Caco-2 (cell line): ENCODE measurements at regions of chr11 and their contacts with region 1.

Region 1: DNA sequence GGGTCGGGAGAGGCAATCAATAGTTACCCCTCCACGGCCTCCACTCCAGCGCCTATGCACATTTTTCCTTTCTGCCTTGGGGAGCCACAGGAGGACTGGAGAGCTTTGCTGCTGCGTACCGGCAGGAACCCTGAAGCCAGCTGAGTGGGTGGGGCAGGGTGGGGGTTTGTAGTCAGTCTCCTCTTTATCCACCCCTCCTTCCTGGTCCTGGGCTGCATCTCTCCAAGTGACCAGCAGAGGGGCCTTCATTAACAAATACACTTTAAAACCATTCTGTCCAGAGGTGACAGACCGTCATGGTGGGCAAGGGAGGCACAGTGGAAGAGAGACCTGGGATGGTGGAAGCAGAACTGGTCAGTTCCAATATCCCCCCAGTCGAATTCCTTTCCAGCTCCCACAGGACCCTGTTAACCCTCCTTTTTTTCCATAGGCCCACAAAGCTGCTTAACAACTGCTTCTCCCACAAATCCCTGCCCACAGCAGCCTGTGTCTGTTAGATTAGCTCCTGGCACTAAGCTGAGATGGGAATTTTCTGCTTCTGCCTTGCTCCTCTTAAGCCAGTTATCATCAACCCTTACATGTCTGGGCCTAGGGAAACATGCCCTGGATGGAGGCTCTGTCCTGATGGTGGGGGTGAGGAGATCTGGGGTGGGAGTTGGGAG is 3.9 kb upstream of the ABCG4 start:
- DNase-seq: peak; percentile 87 to 93
- H3K4me3 ChIP-seq: no peak overlapping the region
- H3K4me3 Mint-ChIP-seq: no peak overlapping the region
- H3K27ac Mint-ChIP-seq: no peak overlapping the region
- H3K4me1 ChIP-seq: peaks cover 5% of the 10 kb centered on the region; the same call in 1 of the 2 replicates
- H3K4me1 Mint-ChIP-seq: no peaks in the 10 kb centered on the region
- H3K27me3 ChIP-seq: no peaks in the 10 kb centered on the region; the same call in 1 of the 2 replicates
- H3K27me3 Mint-ChIP-seq: peaks cover 10% of the 10 kb centered on the region
- CTCF ChIP-seq: peak; percentile 92 to 95

Region 2: DNA sequence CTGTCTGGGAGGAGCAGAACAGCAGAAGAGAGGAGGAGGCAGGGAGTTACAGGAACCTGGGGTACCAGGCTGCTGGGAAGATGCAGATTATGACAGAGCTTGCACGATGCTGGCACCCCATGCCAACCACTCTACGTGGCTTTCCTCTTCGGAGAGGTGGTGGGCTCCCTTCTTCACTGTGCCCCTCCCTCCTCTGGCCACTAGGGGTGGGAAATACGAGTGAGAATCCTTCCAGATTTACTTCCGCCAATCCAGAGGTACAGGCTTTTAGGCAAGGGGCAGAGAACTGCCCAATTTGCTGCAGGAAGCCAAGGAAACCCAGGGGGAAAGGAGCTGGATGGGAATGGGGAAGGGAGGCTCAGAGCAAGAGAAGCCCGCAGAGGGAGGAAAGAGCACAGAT is 100.2 kb before region 1 on chr11:
- CTCF ChIA-PET with region 1: no interaction called
- POLR2A ChIA-PET with region 1: no interaction called
- intact Hi-C with region 1: no loop called
- DNase-seq: no peak
- H3K4me3 ChIP-seq: no peak overlapping the region
- H3K4me3 Mint-ChIP-seq: no peak overlapping the region
- H3K27ac Mint-ChIP-seq: peak overlapping the region; percentile 63
- H3K4me1 ChIP-seq: peaks cover 6% of the 10 kb centered on the region; the same call in 1 of the 2 replicates
- H3K4me1 Mint-ChIP-seq: peaks cover 10% of the 10 kb centered on the region
- H3K27me3 ChIP-seq: no peaks in the 10 kb centered on the region
- H3K27me3 Mint-ChIP-seq: no peaks in the 10 kb centered on the region
- CTCF ChIP-seq: peak; percentile 38 to 48

Region 3: GRCh38 chr11:119155733-119156492 is 11.0 kb after region 1 on chr11:
- CTCF ChIA-PET with region 1: interaction called, 19 read pairs
- POLR2A ChIA-PET with region 1: no interaction called
- intact Hi-C with region 1: no loop called
- DNase-seq: peak; percentile 79 to 80
- H3K4me3 ChIP-seq: no peak overlapping the region
- H3K4me3 Mint-ChIP-seq: no peak overlapping the region
- H3K27ac Mint-ChIP-seq: no peak overlapping the region
- H3K4me1 ChIP-seq: no peaks in the 10 kb centered on the region
- H3K4me1 Mint-ChIP-seq: peaks cover 6% of the 10 kb centered on the region
- H3K27me3 ChIP-seq: no peaks in the 10 kb centered on the region
- H3K27me3 Mint-ChIP-seq: peaks cover 17% of the 10 kb centered on the region
- CTCF ChIP-seq: peak; percentile 61 to 78

Region 4: DNA sequence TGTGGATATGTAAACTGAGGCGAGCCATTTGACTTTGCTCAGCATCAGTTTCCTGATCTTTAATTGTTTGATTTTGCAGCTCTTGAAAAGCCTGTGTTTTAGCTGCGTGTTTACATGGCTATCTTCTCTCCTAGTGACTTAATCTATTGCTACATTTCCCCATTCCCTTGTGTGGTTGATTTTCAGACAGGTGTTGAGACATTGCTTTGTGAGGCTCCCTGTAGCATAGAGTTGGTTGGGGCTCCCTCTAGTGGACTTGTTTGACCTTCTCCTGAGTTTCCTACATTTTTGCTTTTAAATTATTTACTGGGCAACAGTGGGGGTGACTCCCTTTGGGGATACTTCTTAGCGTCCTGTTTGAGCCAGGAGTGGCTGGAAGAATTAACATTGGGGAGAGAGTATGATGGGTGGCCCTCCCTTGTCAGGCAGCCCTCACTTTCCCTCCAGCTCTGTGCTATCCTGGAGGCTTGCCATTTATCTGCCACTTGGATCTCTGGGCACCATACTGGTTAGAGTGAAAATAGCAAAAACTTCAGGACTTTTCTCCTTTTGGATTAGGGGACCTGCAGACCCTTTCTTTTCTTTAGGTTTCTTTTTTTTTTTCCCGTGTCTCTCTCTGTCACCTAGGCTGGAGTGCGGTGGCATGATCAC is 52.0 kb after region 1 on chr11:
- CTCF ChIA-PET with region 1: interaction called, 22 read pairs
- POLR2A ChIA-PET with region 1: interaction called, 3 read pairs
- intact Hi-C with region 1: loop called (anchors 1 kb)
- DNase-seq: peak; percentile 86 to 92
- H3K4me3 ChIP-seq: no peak overlapping the region
- H3K4me3 Mint-ChIP-seq: no peak overlapping the region
- H3K27ac Mint-ChIP-seq: peak overlapping the region; percentile 15
- H3K4me1 ChIP-seq: peaks cover 10% of the 10 kb centered on the region
- H3K4me1 Mint-ChIP-seq: peaks cover 10% of the 10 kb centered on the region
- H3K27me3 ChIP-seq: no peaks in the 10 kb centered on the region
- H3K27me3 Mint-ChIP-seq: peaks cover 2% of the 10 kb centered on the region
- CTCF ChIP-seq: peak; percentile 93 to 96

Region 5: DNA sequence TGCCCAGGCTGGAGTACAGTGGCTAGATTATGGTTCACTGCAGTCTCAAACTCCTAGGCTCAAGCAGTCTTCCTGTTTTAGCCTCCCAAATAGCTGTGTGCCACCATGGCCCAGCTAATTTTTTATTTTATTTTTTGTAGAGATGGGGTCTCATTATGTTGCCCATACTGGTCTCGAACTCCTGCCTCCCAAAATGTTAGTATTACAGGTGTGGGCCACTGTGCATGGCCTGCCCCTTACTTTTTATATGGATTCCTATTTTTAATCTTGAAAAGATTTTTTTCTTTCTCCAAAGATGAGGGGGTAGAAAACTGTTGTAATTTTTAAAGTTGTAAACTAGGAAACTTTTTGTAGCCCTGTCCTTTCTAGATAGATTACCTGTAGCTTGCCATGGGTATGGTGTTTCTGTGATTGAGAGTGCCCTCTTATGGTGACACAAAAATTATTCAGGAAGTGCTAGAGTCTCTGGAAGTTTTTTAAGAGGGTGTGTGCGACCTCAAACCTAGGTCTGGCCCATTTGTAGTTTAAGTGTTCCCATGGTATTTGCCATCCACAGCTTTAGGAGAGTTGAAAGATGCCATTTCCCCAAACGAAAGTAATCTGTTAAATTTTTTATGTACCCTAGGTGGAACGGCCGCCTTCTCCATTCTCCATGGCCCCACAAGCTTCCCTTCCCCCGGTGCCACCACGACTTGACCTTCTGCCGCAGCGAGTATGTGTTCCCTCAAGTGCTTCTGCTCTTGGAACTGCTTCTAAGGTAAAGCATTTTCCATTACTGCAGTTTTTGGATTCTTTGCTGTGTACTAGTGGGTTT is 139.6 kb after region 1 on chr11:
- CTCF ChIA-PET with region 1: interaction called, 4 read pairs
- POLR2A ChIA-PET with region 1: no interaction called
- intact Hi-C with region 1: loop called (anchors 5 kb)
- DNase-seq: peak in 1 of 2 experiments; percentile 63
- H3K4me3 ChIP-seq: no peak overlapping the region
- H3K4me3 Mint-ChIP-seq: no peak overlapping the region
- H3K27ac Mint-ChIP-seq: no peak overlapping the region
- H3K4me1 ChIP-seq: no peaks in the 10 kb centered on the region
- H3K4me1 Mint-ChIP-seq: no peaks in the 10 kb centered on the region
- H3K27me3 ChIP-seq: no peaks in the 10 kb centered on the region
- H3K27me3 Mint-ChIP-seq: no peaks in the 10 kb centered on the region
- CTCF ChIP-seq: peak; percentile 71 to 74

Region 6: GRCh38 chr11:119323538-119324033 is 178.6 kb after region 1 on chr11:
- CTCF ChIA-PET with region 1: no interaction called
- POLR2A ChIA-PET with region 1: no interaction called
- intact Hi-C with region 1: loop called (anchors 1 kb)
- DNase-seq: peak; percentile 82 to 89
- H3K4me3 ChIP-seq: no peak overlapping the region
- H3K4me3 Mint-ChIP-seq: no peak overlapping the region
- H3K27ac Mint-ChIP-seq: no peak overlapping the region
- H3K4me1 ChIP-seq: peaks cover 24% of the 10 kb centered on the region
- H3K4me1 Mint-ChIP-seq: no peaks in the 10 kb centered on the region
- H3K27me3 ChIP-seq: no peaks in the 10 kb centered on the region
- H3K27me3 Mint-ChIP-seq: no peaks in the 10 kb centered on the region
- CTCF ChIP-seq: peak; percentile 84 to 95